OCI-LY7 (cell line): ENCODE measurements at regions of chr18 and their contacts with region 1.

Region 1: GRCh38 chr18:64097497-64097896 is 51.4 kb downstream of the LINC00305 start:
- DNase-seq: no peak
- H3K4me3 ChIP-seq: no peak overlapping the region
- H3K27ac ChIP-seq: no peak overlapping the region
- H3K4me1 ChIP-seq: peaks cover 27% of the 10 kb centered on the region
- CTCF ChIP-seq: peak; percentile 56

Region 2: DNA sequence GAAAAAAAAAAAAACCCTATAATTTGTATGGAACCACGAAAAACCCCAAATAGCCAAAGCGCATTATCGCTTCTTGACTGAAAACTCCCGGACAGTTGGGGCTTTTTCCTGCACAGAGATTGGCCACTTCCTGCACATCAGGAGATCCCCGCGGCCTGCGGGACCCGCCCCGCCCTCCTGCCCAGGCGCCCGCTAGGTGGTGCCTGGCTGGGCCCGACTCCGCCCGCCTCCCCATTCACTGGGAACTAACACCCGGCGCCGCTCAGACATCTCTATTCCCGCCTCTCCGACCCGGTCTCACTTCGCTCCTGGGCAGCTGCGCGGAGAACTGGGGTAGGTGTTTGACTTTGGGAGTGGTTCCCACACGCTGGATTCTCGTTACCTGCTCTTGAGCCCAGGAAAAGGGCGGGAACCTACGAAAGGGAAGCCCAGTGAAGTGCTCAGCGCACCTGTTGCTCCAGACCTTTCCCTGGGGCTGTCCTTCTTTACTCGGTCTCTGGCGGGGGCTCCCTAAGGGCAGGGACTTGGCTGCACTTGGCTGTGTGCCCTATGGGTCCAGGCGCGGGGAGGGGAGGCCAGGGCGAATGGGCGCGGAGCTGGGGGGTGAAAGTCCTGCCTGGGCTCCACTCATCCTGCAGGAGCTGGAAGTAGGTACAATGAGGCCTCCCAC is 148.3 kb before region 1 on chr18 and contains the start of gene HMSD:
- CTCF ChIA-PET with region 1: no interaction called
- POLR2A ChIA-PET with region 1: no interaction called
- intact Hi-C with region 1: no loop called
- DNase-seq: no peak
- H3K4me3 ChIP-seq: no peak within 1 kb of the TSS
- H3K27ac ChIP-seq: no peak within 1 kb of the TSS
- H3K4me1 ChIP-seq: no peaks in the 10 kb centered on the region
- CTCF ChIP-seq: no peak
- total RNA-seq, gene HMSD: not detected in 2 replicates

Region 3: GRCh38 chr18:64149916-64150438 is 52.5 kb after region 1 on chr18:
- CTCF ChIA-PET with region 1: no interaction called
- POLR2A ChIA-PET with region 1: no interaction called
- intact Hi-C with region 1: no loop called
- DNase-seq: no peak
- H3K4me3 ChIP-seq: no peak overlapping the region
- H3K27ac ChIP-seq: no peak overlapping the region
- H3K4me1 ChIP-seq: no peaks in the 10 kb centered on the region
- CTCF ChIP-seq: no peak

Region 4: DNA sequence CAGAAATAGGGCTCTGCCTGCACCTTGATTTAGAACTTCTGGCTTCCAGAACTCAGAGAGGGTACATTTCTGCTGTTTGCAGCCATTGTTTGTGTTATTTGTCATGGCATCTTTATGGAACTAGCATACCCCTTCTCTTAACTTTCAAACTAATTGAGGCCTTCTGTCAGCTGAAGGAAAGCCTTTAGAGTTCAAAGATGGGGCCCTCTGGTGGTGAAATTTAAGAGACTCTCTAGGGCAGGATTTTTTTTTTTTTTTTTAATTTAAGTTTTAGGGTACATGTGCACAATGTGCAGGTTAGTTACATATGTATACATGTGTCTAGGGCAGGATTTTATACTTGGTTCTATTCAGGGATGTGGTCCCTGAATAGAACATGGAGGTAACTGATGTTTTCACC is 312.0 kb after region 1 on chr18:
- CTCF ChIA-PET with region 1: no interaction called
- POLR2A ChIA-PET with region 1: no interaction called
- intact Hi-C with region 1: loop called (anchors 5 kb)
- DNase-seq: peak; percentile 33
- H3K4me3 ChIP-seq: no peak overlapping the region
- H3K27ac ChIP-seq: no peak overlapping the region
- H3K4me1 ChIP-seq: no peaks in the 10 kb centered on the region
- CTCF ChIP-seq: peak; percentile 66